GM12878 (cell line): ENCODE measurements at regions of chr4 and their contacts with region 1.

Region 1: DNA sequence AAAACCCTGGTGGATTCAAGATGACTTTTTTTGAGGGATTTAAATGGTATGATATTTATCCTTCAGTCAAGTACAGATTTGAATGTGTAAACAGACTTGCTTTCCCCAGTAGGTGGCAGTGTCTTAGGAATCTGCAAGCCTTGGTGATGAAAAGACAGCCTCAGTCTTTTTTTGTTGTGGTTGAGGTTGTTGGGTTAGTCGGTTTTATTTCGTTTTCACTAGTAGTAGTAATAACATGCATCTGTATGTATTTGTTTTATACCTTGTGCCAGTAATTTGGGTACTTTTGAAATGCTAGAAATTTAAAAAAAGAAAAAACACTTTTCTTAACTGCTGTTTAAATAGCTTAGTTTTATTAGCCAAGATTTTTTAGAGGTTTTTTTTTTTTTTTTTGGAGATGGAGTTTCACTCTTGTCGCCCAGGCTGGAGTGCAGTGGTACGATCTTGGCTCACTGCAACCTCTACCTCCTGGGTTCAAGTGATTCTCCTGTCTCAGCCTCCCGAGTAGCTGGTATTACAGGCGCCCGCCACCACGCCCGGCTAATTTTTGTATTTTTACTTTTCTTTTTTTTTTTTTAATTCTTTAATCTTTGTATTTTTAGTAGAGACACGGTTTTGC is 39.2 kb downstream of the COPS4 start:
- DNase-seq: peak; percentile 79
- ATAC-seq: peak; percentile 95
- H3K4me3 ChIP-seq: no peak overlapping the region
- H3K27ac ChIP-seq: peak overlapping the region; percentile 7; the same call in 1 of the 2 replicates
- H3K4me1 ChIP-seq: peaks cover 8% of the 10 kb centered on the region
- H3K27me3 ChIP-seq: no peaks in the 10 kb centered on the region
- CTCF ChIP-seq: peak; percentile 74 to 78 (median 77)
- EP300 ChIP-seq: 0 out of 4 replicates have a peak, but pooled peaks of 1 of the 2 experiments have one; percentile 31
- POLR2A ChIP-seq: no peak
- RAD21 ChIP-seq: peak; percentile 92

Region 2: GRCh38 chr4:82500106-82500965 is 573.9 kb before region 1 on chr4:
- CTCF ChIA-PET with region 1: no interaction called
- POLR2A ChIA-PET with region 1: no interaction called
- RAD21 ChIA-PET with region 1: no interaction called
- SMC1A ChIA-PET with region 1: no interaction called
- in situ Hi-C with region 1: no loop called
- intact Hi-C with region 1: no loop called
- DNase-seq: no peak
- ATAC-seq: no peak
- H3K4me3 ChIP-seq: no peak overlapping the region
- H3K27ac ChIP-seq: no peak overlapping the region
- H3K4me1 ChIP-seq: no peaks in the 10 kb centered on the region
- H3K27me3 ChIP-seq: no peaks in the 10 kb centered on the region
- CTCF ChIP-seq: no peak
- EP300 ChIP-seq: no peak
- POLR2A ChIP-seq: no peak
- RAD21 ChIP-seq: no peak

Region 3: GRCh38 chr4:82918091-82918490 is 156.1 kb before region 1 on chr4:
- CTCF ChIA-PET with region 1: no interaction called
- POLR2A ChIA-PET with region 1: no interaction called
- RAD21 ChIA-PET with region 1: no interaction called
- SMC1A ChIA-PET with region 1: no interaction called
- in situ Hi-C with region 1: no loop called
- intact Hi-C with region 1: no loop called
- DNase-seq: no peak
- ATAC-seq: no peak
- H3K4me3 ChIP-seq: no peak overlapping the region
- H3K27ac ChIP-seq: no peak overlapping the region
- H3K4me1 ChIP-seq: no peaks in the 10 kb centered on the region
- H3K27me3 ChIP-seq: no peaks in the 10 kb centered on the region
- CTCF ChIP-seq: no peak
- EP300 ChIP-seq: no peak
- POLR2A ChIP-seq: no peak
- RAD21 ChIP-seq: no peak

Region 4: DNA sequence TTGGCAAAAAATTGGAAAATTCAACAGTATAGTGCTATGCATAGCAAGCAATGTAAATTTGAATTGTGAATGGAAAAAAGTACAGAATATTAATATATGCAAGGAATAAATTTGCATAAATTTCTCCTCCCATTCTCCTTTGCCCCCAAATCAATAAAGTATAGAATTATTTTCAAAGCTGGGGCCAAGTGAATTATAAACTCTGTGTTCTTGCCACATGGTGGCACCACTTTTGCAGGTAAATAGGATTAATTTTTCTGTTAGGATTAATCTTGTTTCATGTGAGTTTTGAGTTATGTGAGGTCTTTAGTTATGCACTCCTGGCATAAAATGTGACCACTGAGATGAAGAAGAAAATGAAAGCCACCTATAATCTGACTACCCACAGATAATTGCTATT is 19.3 kb before region 1 on chr4:
- CTCF ChIA-PET with region 1: interaction called, 14 read pairs
- POLR2A ChIA-PET with region 1: interaction called, 3 read pairs
- RAD21 ChIA-PET with region 1: no interaction called
- SMC1A ChIA-PET with region 1: interaction called, 6 read pairs
- in situ Hi-C with region 1: no loop called
- intact Hi-C with region 1: no loop called
- DNase-seq: no peak
- ATAC-seq: peak; percentile 67
- H3K4me3 ChIP-seq: no peak overlapping the region
- H3K27ac ChIP-seq: no peak overlapping the region
- H3K4me1 ChIP-seq: no peaks in the 10 kb centered on the region
- H3K27me3 ChIP-seq: no peaks in the 10 kb centered on the region
- CTCF ChIP-seq: peak; percentile 19 to 48 (median 38); a peak in 3 of 6 replicates
- EP300 ChIP-seq: no peak
- POLR2A ChIP-seq: no peak
- RAD21 ChIP-seq: peak; percentile 51

Region 5: GRCh38 chr4:83174844-83175414 is 100.7 kb after region 1 on chr4:
- CTCF ChIA-PET with region 1: interaction called, 4 read pairs
- POLR2A ChIA-PET with region 1: no interaction called
- RAD21 ChIA-PET with region 1: interaction called, 12 read pairs
- SMC1A ChIA-PET with region 1: interaction called, 7 read pairs
- in situ Hi-C with region 1: no loop called
- intact Hi-C with region 1: no loop called
- DNase-seq: peak; percentile 87
- ATAC-seq: peak; percentile 76
- H3K4me3 ChIP-seq: 0 out of 2 replicates have a peak overlapping the region, but pooled peaks have one; percentile 30
- H3K27ac ChIP-seq: peak overlapping the region; percentile 90
- H3K4me1 ChIP-seq: peaks cover 62% of the 10 kb centered on the region
- H3K27me3 ChIP-seq: no peaks in the 10 kb centered on the region
- CTCF ChIP-seq: no peak
- EP300 ChIP-seq: peak; percentile 1 to 47; a peak in 1 of 4 replicates
- POLR2A ChIP-seq: no peak
- RAD21 ChIP-seq: no peak

Region 6: GRCh38 chr4:83252782-83253405 is 178.7 kb after region 1 on chr4:
- CTCF ChIA-PET with region 1: interaction called, 18 read pairs
- POLR2A ChIA-PET with region 1: interaction called, 5 read pairs
- RAD21 ChIA-PET with region 1: interaction called, 51 read pairs
- SMC1A ChIA-PET with region 1: interaction called, 31 read pairs
- in situ Hi-C with region 1: loop called (anchors 10 kb)
- intact Hi-C with region 1: loop called (anchors 2 kb)
- DNase-seq: no peak
- ATAC-seq: peak; percentile 83
- H3K4me3 ChIP-seq: no peak overlapping the region
- H3K27ac ChIP-seq: no peak overlapping the region
- H3K4me1 ChIP-seq: peaks cover 13% of the 10 kb centered on the region; the same call in 1 of the 2 replicates
- H3K27me3 ChIP-seq: no peaks in the 10 kb centered on the region
- CTCF ChIP-seq: peak; percentile 82 to 86 (median 84)
- EP300 ChIP-seq: no peak
- POLR2A ChIP-seq: no peak
- RAD21 ChIP-seq: peak; percentile 93

Region 7: DNA sequence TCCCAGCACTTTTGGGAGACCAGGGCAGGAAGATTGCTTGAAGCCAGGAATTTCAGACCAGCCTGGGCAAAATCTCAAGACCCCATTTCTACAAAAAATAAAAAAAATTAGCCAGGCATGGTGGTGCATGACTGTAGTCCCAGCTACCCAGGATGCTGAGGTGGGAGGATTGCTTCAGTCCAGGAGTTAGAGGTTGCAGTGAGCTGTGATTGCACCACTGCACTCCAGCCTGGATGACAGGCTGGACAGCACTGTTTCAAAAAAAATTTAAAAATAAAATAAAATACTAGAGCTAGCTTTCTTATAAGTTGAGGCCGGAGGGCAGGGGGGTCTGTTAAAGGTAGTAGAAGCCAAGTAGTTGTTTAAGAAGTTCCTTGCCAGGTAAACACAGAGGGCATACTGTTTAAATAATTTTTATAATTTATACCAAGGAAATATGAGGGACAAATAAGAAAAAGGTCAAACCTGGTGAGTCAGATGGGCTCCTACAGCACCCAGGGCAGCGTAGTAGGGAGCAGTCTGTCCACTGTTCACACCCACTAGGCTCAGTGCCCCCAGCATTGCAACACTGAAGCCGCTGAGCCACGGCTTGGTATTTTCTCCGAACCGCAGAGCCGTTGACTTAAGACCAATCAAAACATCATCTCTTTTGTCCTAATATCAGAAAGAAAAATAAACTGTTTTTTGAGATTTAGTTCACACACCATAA is 193.1 kb after region 1 on chr4:
- CTCF ChIA-PET with region 1: interaction called, 54 read pairs
- POLR2A ChIA-PET with region 1: interaction called, 5 read pairs
- RAD21 ChIA-PET with region 1: interaction called, 31 read pairs
- SMC1A ChIA-PET with region 1: interaction called, 56 read pairs
- in situ Hi-C with region 1: no loop called
- intact Hi-C with region 1: no loop called
- DNase-seq: no peak
- ATAC-seq: no peak
- H3K4me3 ChIP-seq: no peak overlapping the region
- H3K27ac ChIP-seq: peak overlapping the region; percentile 40
- H3K4me1 ChIP-seq: peaks cover 22% of the 10 kb centered on the region
- H3K27me3 ChIP-seq: no peaks in the 10 kb centered on the region
- CTCF ChIP-seq: no peak
- EP300 ChIP-seq: no peak
- POLR2A ChIP-seq: no peak
- RAD21 ChIP-seq: no peak

Region 8: GRCh38 chr4:83323136-83323535 is 248.9 kb after region 1 on chr4:
- CTCF ChIA-PET with region 1: no interaction called
- POLR2A ChIA-PET with region 1: no interaction called
- RAD21 ChIA-PET with region 1: no interaction called
- SMC1A ChIA-PET with region 1: no interaction called
- in situ Hi-C with region 1: no loop called
- intact Hi-C with region 1: no loop called
- DNase-seq: no peak
- ATAC-seq: no peak
- H3K4me3 ChIP-seq: no peak overlapping the region
- H3K27ac ChIP-seq: no peak overlapping the region
- H3K4me1 ChIP-seq: no peaks in the 10 kb centered on the region
- H3K27me3 ChIP-seq: no peaks in the 10 kb centered on the region
- CTCF ChIP-seq: no peak
- EP300 ChIP-seq: no peak
- POLR2A ChIP-seq: no peak
- RAD21 ChIP-seq: no peak